PC-9 (cell line): ENCODE measurements at regions of chr19 and their contacts with region 1.

Region 1: DNA sequence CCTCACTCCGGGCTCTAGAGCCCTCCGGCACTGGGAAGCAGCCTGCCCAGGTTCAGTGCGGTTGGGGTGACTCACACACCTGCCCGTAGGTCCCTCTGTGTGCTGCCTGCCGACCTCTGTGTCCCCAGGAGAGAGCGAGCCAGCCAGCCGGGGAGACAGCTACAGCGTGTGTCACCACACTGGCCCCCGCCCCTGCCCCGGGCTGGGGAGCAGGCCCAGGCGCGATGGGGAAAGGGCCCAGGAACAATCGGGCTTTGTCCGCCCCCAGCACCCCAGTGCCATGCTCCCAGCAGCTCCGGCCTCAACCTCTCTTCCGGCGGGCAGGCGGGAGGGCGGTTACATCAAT is at the start of gene KLK6:
- DNase-seq: peak; percentile 97 to 99
- H3K4me3 ChIP-seq: peak within 1 kb of the TSS; percentile 76
- H3K27ac ChIP-seq: peak within 1 kb of the TSS; percentile 92
- H3K4me1 ChIP-seq: peaks cover 79% of the 10 kb centered on the region
- H3K27me3 ChIP-seq: no peaks in the 10 kb centered on the region
- CTCF ChIP-seq: no peak
- total RNA-seq, gene KLK6: 490 and 581 TPM in 2 replicates

Region 2: GRCh38 chr19:50933640-50934039 is 35.7 kb before region 1 on chr19:
- CTCF ChIA-PET with region 1: no interaction called
- POLR2A ChIA-PET with region 1: no interaction called
- intact Hi-C with region 1: loop called (anchors 1 kb)
- DNase-seq: peak; percentile 52 to 93
- H3K4me3 ChIP-seq: no peak overlapping the region
- H3K27ac ChIP-seq: peak overlapping the region; percentile 89
- H3K4me1 ChIP-seq: peaks cover 43% of the 10 kb centered on the region
- H3K27me3 ChIP-seq: no peaks in the 10 kb centered on the region
- CTCF ChIP-seq: no peak

Region 3: GRCh38 chr19:50952910-50953309 is 16.5 kb before region 1 on chr19 and contains the start of gene KLK5:
- CTCF ChIA-PET with region 1: no interaction called
- POLR2A ChIA-PET with region 1: interaction called, 7 read pairs
- intact Hi-C with region 1: loop called (anchors 1 kb)
- DNase-seq: peak; percentile 86 to 87
- H3K4me3 ChIP-seq: peak within 1 kb of the TSS; percentile 68
- H3K27ac ChIP-seq: peak within 1 kb of the TSS; percentile 55
- H3K4me1 ChIP-seq: peaks cover 13% of the 10 kb centered on the region
- H3K27me3 ChIP-seq: no peaks in the 10 kb centered on the region
- CTCF ChIP-seq: no peak
- total RNA-seq, gene KLK5: 405 and 412 TPM in 2 replicates

Region 4: DNA sequence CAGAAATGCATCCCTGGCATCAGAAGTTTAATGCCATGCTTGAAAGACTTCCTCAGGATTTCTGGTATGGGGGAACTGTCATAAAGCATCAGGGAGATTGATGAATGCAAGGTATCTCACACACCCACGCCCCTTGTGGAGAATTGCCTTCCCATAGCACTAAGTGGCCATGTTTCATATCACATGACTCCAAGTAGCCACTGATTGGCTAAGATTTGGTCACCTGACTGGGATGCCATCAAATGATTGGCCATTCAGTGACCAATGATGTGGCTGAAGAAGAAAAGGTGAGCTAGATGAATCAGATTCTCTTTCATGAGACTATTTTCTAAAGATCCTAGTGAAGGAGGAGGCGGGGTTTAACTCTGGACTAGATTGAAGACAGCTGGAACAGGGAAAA is 24.7 kb after region 1 on chr19:
- CTCF ChIA-PET with region 1: no interaction called
- POLR2A ChIA-PET with region 1: interaction called, 5 read pairs
- intact Hi-C with region 1: loop called (anchors 1 kb)
- DNase-seq: peak in 1 of 2 experiments; percentile 62
- H3K4me3 ChIP-seq: no peak overlapping the region
- H3K27ac ChIP-seq: peak overlapping the region; percentile 99
- H3K4me1 ChIP-seq: peaks cover 37% of the 10 kb centered on the region
- H3K27me3 ChIP-seq: no peaks in the 10 kb centered on the region
- CTCF ChIP-seq: no peak

Region 5: GRCh38 chr19:51097166-51097738 is 127.9 kb after region 1 on chr19:
- CTCF ChIA-PET with region 1: no interaction called
- POLR2A ChIA-PET with region 1: no interaction called
- intact Hi-C with region 1: loop called (anchors 2 kb)
- DNase-seq: peak; percentile 62 to 69
- H3K4me3 ChIP-seq: no peak overlapping the region
- H3K27ac ChIP-seq: no peak overlapping the region
- H3K4me1 ChIP-seq: no peaks in the 10 kb centered on the region
- H3K27me3 ChIP-seq: no peaks in the 10 kb centered on the region
- CTCF ChIP-seq: peak; percentile 85